K562 (cell line): ENCODE measurements at regions of chr20 and their contacts with region 1.

Region 1: DNA sequence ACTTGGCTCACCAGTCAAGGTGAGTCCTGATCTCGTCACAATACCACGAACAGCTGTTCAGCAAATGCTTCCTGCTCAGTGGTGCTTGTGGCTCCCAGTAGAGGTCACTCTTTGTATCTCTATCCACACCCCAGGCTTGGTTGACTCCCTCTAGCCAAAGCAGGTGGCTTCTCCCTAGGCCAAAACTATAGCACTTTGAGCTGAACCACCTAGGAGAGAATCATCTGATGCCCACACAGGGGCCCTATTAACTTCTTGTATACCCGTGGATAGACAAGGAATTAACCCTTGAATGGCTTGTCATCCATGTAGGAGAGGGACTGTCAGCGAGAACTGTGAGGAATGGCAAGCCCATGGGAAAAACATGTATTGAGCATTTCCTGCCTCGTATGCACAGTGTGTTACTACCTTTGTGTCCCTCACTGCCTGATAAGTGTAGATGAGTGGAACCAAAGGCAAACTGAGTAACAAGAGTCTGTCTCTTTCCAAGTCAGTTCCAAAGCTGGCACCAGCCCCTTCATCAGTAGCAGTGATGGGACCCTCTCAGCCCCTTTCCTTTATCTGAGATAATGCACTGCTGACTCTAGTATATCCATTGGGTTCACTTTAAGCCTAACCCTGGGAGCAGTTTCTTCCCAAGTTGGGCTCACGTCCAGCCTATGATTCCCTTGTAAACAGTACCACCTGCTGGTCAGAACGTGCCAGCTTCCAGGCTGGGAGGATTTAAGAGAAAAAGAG is 42.5 kb downstream of the EIF2S2 start:
- DNase-seq: peak; percentile 61 to 80 (median 64)
- ATAC-seq: peak; percentile 93
- H3K4me3 ChIP-seq: no peak overlapping the region
- H3K27ac ChIP-seq: no peak overlapping the region
- H3K4me1 ChIP-seq: peaks cover 0 to 14% of the 10 kb centered on the region in 2 experiments; a peak in 2 of 5 replicates
- H3K27me3 ChIP-seq: no peaks in the 10 kb centered on the region
- CTCF ChIP-seq: peak; percentile 84 to 93 (median 87)
- EP300 ChIP-seq: no peak
- POLR2A ChIP-seq: no peak
- RAD21 ChIP-seq: peak; percentile 86 to 91

Region 2: GRCh38 chr20:33862709-33863403 is 206.7 kb before region 1 on chr20:
- CTCF ChIA-PET with region 1: interaction called, 19 read pairs
- POLR2A ChIA-PET with region 1: no interaction called
- in situ Hi-C with region 1: no loop called
- intact Hi-C with region 1: loop called (anchors 5 kb)
- DNase-seq: peak; percentile 62 to 88 (median 84)
- ATAC-seq: peak; percentile 87
- H3K4me3 ChIP-seq: peak overlapping the region; percentile 23; the same call in 1 of the 2 replicates
- H3K27ac ChIP-seq: no peak overlapping the region
- H3K4me1 ChIP-seq: peaks cover 0 to 13% of the 10 kb centered on the region in 2 experiments; a peak in 3 of 5 replicates
- H3K27me3 ChIP-seq: peaks cover 11 to 34% of the 10 kb centered on the region in 2 experiments; a peak in 4 of 5 replicates
- CTCF ChIP-seq: peak; percentile 73 to 82 (median 79)
- EP300 ChIP-seq: no peak
- POLR2A ChIP-seq: no peak
- RAD21 ChIP-seq: peak; percentile 43 to 69; a peak in 3 of 4 replicates

Region 3: GRCh38 chr20:33933469-33933909 is 136.0 kb before region 1 on chr20:
- CTCF ChIA-PET with region 1: interaction called, 9 read pairs
- POLR2A ChIA-PET with region 1: no interaction called
- in situ Hi-C with region 1: loop called (anchors 10 kb)
- intact Hi-C with region 1: loop called (anchors 1 kb)
- DNase-seq: peak; percentile 70 to 82 (median 73)
- ATAC-seq: peak; percentile 99
- H3K4me3 ChIP-seq: no peak overlapping the region
- H3K27ac ChIP-seq: no peak overlapping the region
- H3K4me1 ChIP-seq: no peaks in the 10 kb centered on the region; a peak in 2 of 5 replicates
- H3K27me3 ChIP-seq: peaks cover 3 to 15% of the 10 kb centered on the region in 2 experiments; a peak in 4 of 5 replicates
- CTCF ChIP-seq: peak; percentile 85 to 93 (median 87)
- EP300 ChIP-seq: no peak
- POLR2A ChIP-seq: no peak
- RAD21 ChIP-seq: peak; percentile 89 to 94

Region 4: GRCh38 chr20:33954504-33954903 is 115.0 kb before region 1 on chr20:
- CTCF ChIA-PET with region 1: no interaction called
- POLR2A ChIA-PET with region 1: no interaction called
- in situ Hi-C with region 1: loop called (anchors 5 kb)
- intact Hi-C with region 1: no loop called
- DNase-seq: no peak
- ATAC-seq: no peak
- H3K4me3 ChIP-seq: no peak overlapping the region
- H3K27ac ChIP-seq: no peak overlapping the region
- H3K4me1 ChIP-seq: no peaks in the 10 kb centered on the region
- H3K27me3 ChIP-seq: peaks cover 8 to 13% of the 10 kb centered on the region in 2 experiments; a peak in 3 of 5 replicates
- CTCF ChIP-seq: no peak
- EP300 ChIP-seq: no peak
- POLR2A ChIP-seq: no peak
- RAD21 ChIP-seq: no peak